GM18951 (cell line): ENCODE measurements at regions of chr4 and their contacts with region 1.

Region 1: GRCh38 chr4:82201805-82202641 is 171.8 kb downstream of the HNRNPD start:
- POLR2A ChIP-seq: no peak

Region 2: GRCh38 chr4:81405894-81406401 is 796.1 kb before region 1 on chr4:
- in situ Hi-C with region 1: loop called (anchors 25 kb)
- POLR2A ChIP-seq: no peak

Region 3: GRCh38 chr4:82677321-82677720 is 475.3 kb after region 1 on chr4:
- in situ Hi-C with region 1: no loop called
- POLR2A ChIP-seq: no peak